Activated T-helper 2 cell treated with anti-CD3 and anti-CD28 coated beads, Interferon-gamma antibody, Interleukin-2, Interleukin-4, amounts not matched to agents 10 μg/mL and 5 μg/mL and 100 μg/mL, durations not matched to agents 14 hours and 24 hours and 36 hours (primary cell): ENCODE measurements at regions of chr4 and their contacts with region 1.

Region 1: GRCh38 chr4:81494031-81494431 is 22.3 kb upstream of the RASGEF1B start:
- DNase-seq: no peak
- H3K4me3 Mint-ChIP-seq: peak overlapping the region; percentile 17
- H3K27ac Mint-ChIP-seq: no peak overlapping the region
- H3K4me1 Mint-ChIP-seq: peaks cover 34% of the 10 kb centered on the region
- H3K27me3 Mint-ChIP-seq: peaks cover 21% of the 10 kb centered on the region

Region 2: GRCh38 chr4:81505004-81505598 is 11.1 kb after region 1 on chr4:
- intact Hi-C with region 1: loop called (anchors 1 kb)
- DNase-seq: peak; percentile 36
- H3K4me3 Mint-ChIP-seq: no peak overlapping the region
- H3K27ac Mint-ChIP-seq: no peak overlapping the region
- H3K4me1 Mint-ChIP-seq: peaks cover 18% of the 10 kb centered on the region
- H3K27me3 Mint-ChIP-seq: peaks cover 29% of the 10 kb centered on the region

Region 3: DNA sequence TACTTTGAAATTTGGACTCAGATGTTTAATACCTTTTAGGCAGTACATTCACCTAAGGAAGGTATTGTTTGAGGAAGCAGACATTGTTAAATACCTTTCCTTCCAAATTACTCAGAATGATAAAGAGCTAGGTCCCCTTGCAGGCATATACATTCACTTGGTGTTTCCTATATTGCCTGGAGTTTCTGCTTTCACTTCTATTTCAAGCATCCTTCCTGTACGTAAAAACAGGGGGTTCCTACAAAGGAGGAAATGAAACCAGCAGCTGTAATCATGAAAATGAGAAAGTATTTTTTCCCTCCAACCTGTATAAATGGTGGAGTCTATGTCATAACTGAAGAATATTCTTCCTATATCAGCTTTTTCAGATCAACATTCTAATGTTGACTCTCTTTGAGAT is 68.1 kb after region 1 on chr4:
- intact Hi-C with region 1: loop called (anchors 5 kb)
- DNase-seq: no peak
- H3K4me3 Mint-ChIP-seq: no peak overlapping the region
- H3K27ac Mint-ChIP-seq: no peak overlapping the region
- H3K4me1 Mint-ChIP-seq: peaks cover 10% of the 10 kb centered on the region
- H3K27me3 Mint-ChIP-seq: peaks cover 5% of the 10 kb centered on the region

Region 4: DNA sequence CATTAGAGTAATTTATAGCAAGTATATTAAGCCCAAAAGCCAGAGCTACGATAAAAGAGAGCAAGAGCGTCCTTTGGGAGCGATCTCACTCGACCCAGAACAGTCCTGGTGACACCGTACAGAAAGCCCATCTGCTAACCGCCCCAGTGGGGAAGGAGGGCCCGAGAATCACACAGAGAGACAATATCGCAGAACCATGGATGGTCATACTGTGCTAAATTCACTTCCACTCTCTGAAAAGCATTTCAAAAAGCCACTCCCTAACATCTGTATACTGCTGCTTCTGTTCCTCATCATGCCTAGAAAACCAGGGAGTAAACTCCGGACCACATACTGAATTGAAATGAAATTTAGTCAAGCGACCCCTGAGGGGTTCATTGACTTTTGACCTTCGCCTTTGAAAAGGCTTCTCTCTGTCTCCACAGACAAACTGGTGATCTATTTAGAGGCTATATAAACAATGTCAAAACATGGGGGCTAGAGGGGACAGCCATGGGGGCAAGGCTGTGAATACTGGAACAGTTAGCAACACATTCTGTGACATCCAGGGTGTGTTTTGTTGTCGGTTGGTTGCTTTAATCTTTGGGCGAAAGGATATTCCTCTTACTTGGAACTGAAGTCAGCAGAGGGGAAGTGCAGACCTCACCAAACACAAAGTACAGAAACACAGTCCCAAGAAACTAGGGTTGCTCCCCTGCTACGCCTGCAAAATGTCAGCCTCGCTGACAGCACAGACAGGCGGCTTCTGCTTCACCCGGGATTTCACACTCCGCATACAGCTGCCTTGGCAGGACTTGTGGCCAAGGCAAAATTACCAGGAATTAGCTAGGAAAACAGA is 106.7 kb after region 1 on chr4:
- intact Hi-C with region 1: no loop called
- DNase-seq: no peak
- H3K4me3 Mint-ChIP-seq: no peak overlapping the region
- H3K27ac Mint-ChIP-seq: no peak overlapping the region
- H3K4me1 Mint-ChIP-seq: no peaks in the 10 kb centered on the region
- H3K27me3 Mint-ChIP-seq: no peaks in the 10 kb centered on the region

Region 5: DNA sequence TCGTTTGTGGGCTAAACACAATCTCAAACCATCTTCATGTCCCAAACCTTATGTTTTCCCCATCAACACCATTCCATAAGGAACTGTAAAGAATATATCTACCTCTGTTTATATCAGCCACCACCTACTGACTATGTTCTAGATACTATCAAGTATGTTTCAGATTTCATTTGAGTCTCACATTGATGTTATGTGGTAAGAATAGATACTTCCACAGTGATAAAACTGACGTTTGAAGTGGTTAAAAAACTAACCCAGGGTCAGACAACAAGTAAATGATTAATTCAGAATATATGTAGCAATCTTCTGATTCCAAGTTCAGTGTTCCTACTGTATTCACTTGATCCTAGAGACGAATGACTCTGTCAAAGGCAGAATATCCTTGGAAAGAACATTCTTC is 134.5 kb after region 1 on chr4:
- intact Hi-C with region 1: loop called (anchors 5 kb)
- DNase-seq: no peak
- H3K4me3 Mint-ChIP-seq: no peak overlapping the region
- H3K27ac Mint-ChIP-seq: no peak overlapping the region
- H3K4me1 Mint-ChIP-seq: peaks cover 10% of the 10 kb centered on the region
- H3K27me3 Mint-ChIP-seq: peaks cover 14% of the 10 kb centered on the region

Region 6: DNA sequence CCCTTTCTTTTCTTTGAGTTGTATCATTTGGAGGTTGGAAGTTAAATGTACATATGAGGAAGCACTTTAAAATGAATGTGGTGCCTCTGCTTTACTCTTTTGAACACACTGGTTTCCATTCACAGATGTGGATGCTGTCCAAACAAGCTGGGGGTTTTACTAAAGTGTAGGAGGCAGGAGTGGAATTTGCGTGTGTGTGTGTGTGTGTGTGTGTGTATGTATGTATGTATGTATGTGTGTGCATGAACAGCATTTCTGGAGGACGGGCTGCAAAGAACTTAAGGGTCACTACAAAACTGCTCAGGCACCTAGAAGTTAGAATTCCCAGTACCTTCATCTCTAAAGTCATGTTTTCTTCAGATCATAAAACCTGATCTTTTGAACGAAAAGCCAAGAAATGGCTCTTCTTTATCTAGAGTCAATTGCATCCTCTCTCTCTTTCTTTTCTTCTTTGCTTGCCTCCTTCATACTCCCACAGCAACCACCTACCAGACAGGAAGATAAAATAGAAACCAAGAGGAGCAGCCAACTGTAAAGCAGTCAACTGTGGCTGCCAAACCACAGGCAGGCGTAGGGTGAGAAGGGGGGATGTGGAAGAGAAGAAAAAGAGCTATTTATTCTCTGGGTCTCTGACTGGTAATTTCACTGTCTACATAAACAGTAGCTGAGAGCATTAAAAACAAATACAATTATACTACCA is 154.7 kb after region 1 on chr4:
- intact Hi-C with region 1: loop called (anchors 5 kb)
- DNase-seq: peak; percentile 22
- H3K4me3 Mint-ChIP-seq: peak overlapping the region; percentile 27
- H3K27ac Mint-ChIP-seq: peak overlapping the region; percentile 1
- H3K4me1 Mint-ChIP-seq: peaks cover 46% of the 10 kb centered on the region
- H3K27me3 Mint-ChIP-seq: no peaks in the 10 kb centered on the region

Region 7: GRCh38 chr4:81827577-81828202 is 333.7 kb after region 1 on chr4:
- intact Hi-C with region 1: loop called (anchors 5 kb)
- DNase-seq: no peak
- H3K4me3 Mint-ChIP-seq: no peak overlapping the region
- H3K27ac Mint-ChIP-seq: no peak overlapping the region
- H3K4me1 Mint-ChIP-seq: peaks cover 9% of the 10 kb centered on the region
- H3K27me3 Mint-ChIP-seq: no peaks in the 10 kb centered on the region